ENCODE measurements at regions of chr4 and their contacts with region 1.

Region 1: GRCh38 chr4:125314676-125315575 is at the start of gene FAT4:
- DNase-seq: peak; percentile 96
- total RNA-seq, gene FAT4: 18.6 TPM

Region 2: DNA sequence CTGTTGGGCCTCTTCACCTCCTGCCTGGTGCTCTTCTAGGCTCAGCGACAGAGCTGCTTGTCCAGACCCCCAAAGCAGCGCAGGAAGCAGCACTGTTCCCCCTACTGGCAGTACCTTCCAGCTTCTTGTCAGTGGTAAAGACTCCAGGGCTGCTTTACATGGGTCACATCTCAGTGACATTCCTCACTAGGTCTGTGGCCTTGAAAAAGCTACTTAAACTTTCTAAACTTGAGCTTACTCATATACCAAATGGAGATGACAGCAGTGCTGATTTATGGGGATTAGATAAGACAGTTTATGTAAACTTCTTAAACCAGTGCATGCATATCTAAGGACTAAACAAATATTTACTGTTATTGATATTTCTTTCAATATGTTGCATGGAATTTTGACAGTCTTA is 117.2 kb after region 1 on chr4:
- intact Hi-C with region 1: loop called (anchors 1 kb)
- DNase-seq: no peak

Region 3: DNA sequence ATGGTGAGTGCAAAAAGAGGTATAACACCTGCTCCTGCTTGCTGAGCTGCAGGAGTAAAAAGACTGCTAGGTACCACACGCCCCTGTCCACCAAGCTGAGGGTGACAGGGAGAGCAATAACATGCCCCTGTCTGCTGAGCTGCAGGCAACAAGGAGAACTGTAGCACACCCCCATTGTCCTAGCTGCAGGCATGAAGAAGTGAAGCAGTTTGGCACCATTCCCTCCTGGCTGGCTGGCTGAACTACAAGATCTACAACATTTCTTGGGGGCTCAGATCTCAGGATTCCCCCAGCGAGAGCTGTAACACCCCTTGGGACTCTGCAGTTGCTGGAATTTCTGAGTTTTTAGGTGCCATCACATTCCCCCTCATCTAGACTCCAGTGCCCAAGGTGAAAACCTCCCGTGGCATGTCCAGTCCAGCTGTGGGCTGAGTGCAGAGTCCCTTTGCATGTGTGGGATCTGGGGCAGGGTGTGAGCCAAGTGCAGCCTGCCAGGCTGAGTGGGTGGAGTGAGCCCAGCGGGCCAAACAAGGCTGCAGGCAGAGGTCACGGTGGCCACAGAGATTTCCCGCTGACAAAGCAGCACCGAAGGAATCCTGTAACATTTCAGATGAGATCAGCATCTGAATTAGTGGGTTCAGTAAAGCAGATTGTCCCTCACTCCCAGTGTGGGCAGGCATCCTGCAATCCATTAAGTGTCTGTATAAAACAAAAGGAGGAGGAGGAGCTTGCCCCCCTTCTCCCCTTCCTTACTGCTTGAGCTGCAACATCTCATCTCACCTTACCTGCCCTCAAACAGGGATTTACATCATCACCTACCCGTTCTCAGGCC is 324.1 kb after region 1 on chr4:
- intact Hi-C with region 1: loop called (anchors 10 kb)
- DNase-seq: no peak

Region 4: GRCh38 chr4:125750828-125751466 is 436.0 kb after region 1 on chr4:
- intact Hi-C with region 1: loop called (anchors 1 kb)
- DNase-seq: no peak

Measured in cardiac septum (tissue), 1 donor.